H1 (cell line): ENCODE measurements at regions of chr1 and their contacts with region 1.

Region 1: GRCh38 chr1:59971464-59971911 is 44.9 kb upstream of the CYP2J2 start:
- DNase-seq: peak in 1 of 2 experiments; percentile 90
- H3K4me3 ChIP-seq: peak overlapping the region in 3 of 4 experiments; percentile 13 to 45 (median 23); a peak in 3 of 8 replicates
- H3K27ac ChIP-seq: no peak overlapping the region
- H3K4me1 ChIP-seq: peaks cover 0 to 2% (median under 1%) of the 10 kb centered on the region in 4 experiments; a peak in 3 of 7 replicates
- H3K27me3 ChIP-seq: no peaks in the 10 kb centered on the region; a peak in 1 of 7 replicates
- CTCF ChIP-seq: peak; percentile 84 to 89 (median 87)
- EP300 ChIP-seq: no peak
- POLR2A ChIP-seq: no peak
- RAD21 ChIP-seq: peak; percentile 93 to 94

Region 2: GRCh38 chr1:59856725-59857338 is 114.7 kb before region 1 on chr1:
- CTCF ChIA-PET with region 1: no interaction called
- POLR2A ChIA-PET with region 1: no interaction called
- DNase-seq: no peak
- H3K4me3 ChIP-seq: no peak overlapping the region
- H3K27ac ChIP-seq: no peak overlapping the region
- H3K4me1 ChIP-seq: peaks cover 0 to 3% (median 0%) of the 10 kb centered on the region in 4 experiments; a peak in 2 of 7 replicates
- H3K27me3 ChIP-seq: no peaks in the 10 kb centered on the region
- CTCF ChIP-seq: no peak
- EP300 ChIP-seq: no peak
- POLR2A ChIP-seq: no peak
- RAD21 ChIP-seq: no peak

Region 3: DNA sequence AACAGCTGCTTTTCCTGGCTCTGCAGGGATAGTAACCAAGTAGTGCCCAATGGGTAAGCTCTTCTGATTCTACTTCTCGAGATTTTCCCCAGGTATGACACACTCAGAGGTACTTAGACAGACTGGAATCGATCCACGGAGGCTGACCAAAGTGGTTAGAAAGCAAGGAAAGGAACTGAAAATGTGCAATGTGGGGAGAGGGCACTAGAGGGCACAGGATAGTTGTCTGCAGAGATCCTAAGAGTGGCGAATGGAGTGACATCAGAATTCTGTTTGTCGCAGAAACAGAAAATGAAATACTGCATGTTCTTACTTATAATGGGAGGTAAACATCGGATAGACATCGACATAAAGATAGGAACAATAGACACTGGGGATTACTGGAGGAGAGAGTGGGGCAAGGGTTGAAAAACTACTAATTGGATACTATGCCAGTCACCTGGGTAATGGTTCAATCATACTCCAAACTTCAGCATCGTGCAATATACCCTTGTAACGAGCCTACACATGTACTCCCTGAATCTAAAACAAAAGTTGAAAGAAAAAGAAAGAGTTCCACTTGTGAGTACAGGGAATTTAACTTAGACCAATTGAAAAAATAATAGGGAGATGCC is 68.2 kb before region 1 on chr1:
- CTCF ChIA-PET with region 1: interaction called, 12 read pairs
- POLR2A ChIA-PET with region 1: no interaction called
- DNase-seq: peak in 1 of 2 experiments; percentile 52
- H3K4me3 ChIP-seq: no peak overlapping the region
- H3K27ac ChIP-seq: no peak overlapping the region
- H3K4me1 ChIP-seq: no peaks in the 10 kb centered on the region
- H3K27me3 ChIP-seq: no peaks in the 10 kb centered on the region
- CTCF ChIP-seq: peak; percentile 32 to 80 (median 58)
- EP300 ChIP-seq: no peak
- POLR2A ChIP-seq: no peak
- RAD21 ChIP-seq: peak; percentile 66

Region 4: DNA sequence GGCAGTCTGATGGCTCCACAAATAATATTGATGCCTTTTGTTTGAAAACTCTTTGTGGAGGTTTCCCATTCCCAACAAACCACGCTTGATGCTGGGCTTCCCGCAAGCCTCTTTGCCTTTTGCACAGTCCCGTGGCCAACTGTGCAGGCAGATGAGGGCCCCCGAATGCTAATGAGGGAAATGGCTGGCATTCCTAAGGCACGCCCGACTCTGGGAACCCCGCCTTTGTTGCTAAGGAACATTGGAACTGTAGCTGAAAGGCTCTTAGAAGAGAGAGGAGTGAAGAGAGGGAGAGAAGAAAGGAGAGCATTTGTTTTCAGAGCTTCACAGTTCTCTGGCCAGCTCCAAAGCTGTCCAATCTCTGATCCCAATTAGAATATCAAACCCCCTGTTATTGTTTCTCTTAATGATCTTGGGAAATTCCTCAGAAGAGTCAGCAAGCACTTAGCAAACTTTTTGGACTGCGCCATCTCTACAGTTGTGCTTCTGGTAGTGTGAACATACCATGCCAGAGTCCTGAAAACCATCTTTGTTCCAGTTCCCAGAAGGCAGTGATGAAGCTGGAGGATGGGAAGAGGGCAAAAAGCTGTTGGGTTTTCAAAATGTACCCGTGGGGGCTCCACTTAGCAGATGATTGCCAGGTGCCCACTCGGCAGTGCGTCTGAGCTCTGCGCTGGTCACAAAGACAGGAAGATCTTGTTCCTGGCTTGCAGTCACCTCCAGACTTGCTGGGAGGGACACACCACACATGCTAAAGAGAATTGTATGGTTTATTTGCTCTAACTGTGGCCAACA is 15.2 kb after region 1 on chr1:
- CTCF ChIA-PET with region 1: interaction called, 33 read pairs
- POLR2A ChIA-PET with region 1: no interaction called
- DNase-seq: no peak
- H3K4me3 ChIP-seq: no peak overlapping the region
- H3K27ac ChIP-seq: no peak overlapping the region
- H3K4me1 ChIP-seq: no peaks in the 10 kb centered on the region
- H3K27me3 ChIP-seq: no peaks in the 10 kb centered on the region
- CTCF ChIP-seq: no peak
- EP300 ChIP-seq: no peak
- POLR2A ChIP-seq: no peak
- RAD21 ChIP-seq: no peak

Region 5: GRCh38 chr1:60126723-60127122 is 155.2 kb after region 1 on chr1:
- CTCF ChIA-PET with region 1: interaction called, 43 read pairs
- POLR2A ChIA-PET with region 1: no interaction called
- DNase-seq: no peak
- H3K4me3 ChIP-seq: no peak overlapping the region
- H3K27ac ChIP-seq: no peak overlapping the region
- H3K4me1 ChIP-seq: no peaks in the 10 kb centered on the region
- H3K27me3 ChIP-seq: peaks cover 0 to 1% (median 0%) of the 10 kb centered on the region in 4 experiments; a peak in 1 of 7 replicates
- CTCF ChIP-seq: peak in 2 of 3 experiments; percentile 48 to 57; a peak in 3 of 4 replicates
- EP300 ChIP-seq: no peak
- POLR2A ChIP-seq: no peak
- RAD21 ChIP-seq: peak; percentile 62 to 72

Region 6: GRCh38 chr1:60281360-60281932 is 310.0 kb after region 1 on chr1:
- CTCF ChIA-PET with region 1: interaction called, 12 read pairs
- POLR2A ChIA-PET with region 1: no interaction called
- DNase-seq: peak; percentile 59 to 61
- H3K4me3 ChIP-seq: no peak overlapping the region
- H3K27ac ChIP-seq: no peak overlapping the region
- H3K4me1 ChIP-seq: peaks cover 0 to 5% (median 0%) of the 10 kb centered on the region in 4 experiments; a peak in 2 of 7 replicates
- H3K27me3 ChIP-seq: no peaks in the 10 kb centered on the region
- CTCF ChIP-seq: peak; percentile 78 to 95 (median 82)
- EP300 ChIP-seq: no peak
- POLR2A ChIP-seq: no peak
- RAD21 ChIP-seq: peak; percentile 97 to 98